ENCODE measurements at regions of chr15 and their contacts with region 1.

Region 1: DNA sequence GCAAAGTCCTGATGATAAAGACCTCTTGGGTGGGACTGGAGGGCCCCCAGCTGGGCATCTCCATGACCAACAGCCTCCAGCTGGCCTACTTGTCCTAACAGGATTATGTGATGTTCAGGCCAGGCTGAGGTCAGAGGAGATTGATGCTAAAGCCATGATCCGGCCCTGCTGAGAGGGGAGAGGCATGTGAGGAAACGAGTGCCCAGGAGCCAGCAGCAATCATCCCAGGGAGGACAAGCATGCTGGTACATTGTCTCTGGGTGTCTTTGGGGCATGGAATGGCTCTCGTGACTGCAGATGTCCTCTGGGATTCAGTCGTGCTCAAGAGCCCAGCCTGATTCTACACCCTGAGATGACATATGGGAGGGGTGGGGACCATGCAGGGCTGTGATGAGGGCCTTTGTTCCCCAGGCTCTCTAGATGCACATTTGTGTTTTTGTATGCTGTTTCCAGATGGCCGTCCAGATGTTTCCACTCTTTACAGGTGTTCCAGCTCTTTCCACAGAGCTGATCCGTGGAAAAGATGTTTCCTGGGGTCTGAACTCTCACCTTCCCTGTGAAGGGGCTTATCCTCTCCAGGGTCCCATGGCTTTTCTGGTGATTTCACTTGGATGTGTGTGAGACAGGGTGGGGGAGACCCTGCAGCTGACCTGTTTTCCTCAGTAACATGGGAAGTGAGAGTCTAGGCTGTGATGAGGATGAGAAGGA is 20.2 kb downstream of the SLC24A1 start:
- DNase-seq: no peak
- ATAC-seq: peak in 1 of 4 donors; percentile 8
- H3K4me3 ChIP-seq: no peak overlapping the region
- H3K27ac ChIP-seq: no peak overlapping the region
- H3K4me1 ChIP-seq: no peaks in the 10 kb centered on the region
- H3K27me3 ChIP-seq: no peaks in the 10 kb centered on the region
- CTCF ChIP-seq: no peak
- POLR2A ChIP-seq: no peak

Region 2: GRCh38 chr15:65856821-65857455 is 215.0 kb after region 1 on chr15:
- intact Hi-C with region 1: loop called in 1 of 2 experiments (anchors 10 kb)
- DNase-seq: peak; percentile 66 to 76 (median 68)
- ATAC-seq: peak; percentile 76 to 89 (median 84)
- H3K4me3 ChIP-seq: no peak overlapping the region
- H3K27ac ChIP-seq: no peak overlapping the region
- H3K4me1 ChIP-seq: no peaks in the 10 kb centered on the region
- H3K27me3 ChIP-seq: no peaks in the 10 kb centered on the region
- CTCF ChIP-seq: peak; percentile 73 to 92 (median 87)
- POLR2A ChIP-seq: no peak

Measured in right lobe of liver (tissue), 6 donors.